ENCODE measurements at regions of chr6 and their contacts with region 1.

Region 1: GRCh38 chr6:39114704-39115599 is at the start of gene SAYSD1:
- DNase-seq: peak; percentile 96
- ATAC-seq: peak; percentile 77
- H3K4me3 Mint-ChIP-seq: peak within 1 kb of the TSS; percentile 85
- H3K27ac Mint-ChIP-seq: peak within 1 kb of the TSS; percentile 98
- H3K4me1 Mint-ChIP-seq: peaks cover 63% of the 10 kb centered on the region
- H3K27me3 Mint-ChIP-seq: no peaks in the 10 kb centered on the region
- total RNA-seq, gene SAYSD1: 14.1 to 16.7 TPM

Region 2: GRCh38 chr6:37987018-37987417 is 1127.9 kb before region 1 on chr6:
- CTCF ChIA-PET with region 1: no interaction called
- POLR2A ChIA-PET with region 1: no interaction called
- intact Hi-C with region 1: loop called in 1 of 2 experiments (anchors 10 kb)
- DNase-seq: peak; percentile 55
- ATAC-seq: peak; percentile 74
- H3K4me3 Mint-ChIP-seq: peak overlapping the region; percentile 7
- H3K27ac Mint-ChIP-seq: peak overlapping the region; percentile 29
- H3K4me1 Mint-ChIP-seq: peaks cover 71% of the 10 kb centered on the region
- H3K27me3 Mint-ChIP-seq: no peaks in the 10 kb centered on the region

Region 3: GRCh38 chr6:38702558-38703397 is 412.2 kb before region 1 on chr6 and contains the start of gene GLO1:
- CTCF ChIA-PET with region 1: no interaction called
- POLR2A ChIA-PET with region 1: no interaction called
- intact Hi-C with region 1: loop called in 1 of 2 experiments (anchors 1 kb)
- DNase-seq: peak; percentile 98
- ATAC-seq: peak; percentile 100
- H3K4me3 Mint-ChIP-seq: peak within 1 kb of the TSS; percentile 96
- H3K27ac Mint-ChIP-seq: peak within 1 kb of the TSS; percentile 98
- H3K4me1 Mint-ChIP-seq: peaks cover 38% of the 10 kb centered on the region
- H3K27me3 Mint-ChIP-seq: peaks cover 3% of the 10 kb centered on the region
- total RNA-seq, gene GLO1: 150 to 152 TPM

Region 4: GRCh38 chr6:39102071-39102820 is 12.7 kb before region 1 on chr6:
- CTCF ChIA-PET with region 1: interaction called, 18 read pairs
- POLR2A ChIA-PET with region 1: interaction called, 3 read pairs
- intact Hi-C with region 1: loop called in 1 of 2 experiments (anchors 1 kb)
- DNase-seq: peak; percentile 58
- ATAC-seq: peak; percentile 60
- H3K4me3 Mint-ChIP-seq: no peak overlapping the region
- H3K27ac Mint-ChIP-seq: no peak overlapping the region
- H3K4me1 Mint-ChIP-seq: peaks cover 33% of the 10 kb centered on the region
- H3K27me3 Mint-ChIP-seq: no peaks in the 10 kb centered on the region

Region 5: DNA sequence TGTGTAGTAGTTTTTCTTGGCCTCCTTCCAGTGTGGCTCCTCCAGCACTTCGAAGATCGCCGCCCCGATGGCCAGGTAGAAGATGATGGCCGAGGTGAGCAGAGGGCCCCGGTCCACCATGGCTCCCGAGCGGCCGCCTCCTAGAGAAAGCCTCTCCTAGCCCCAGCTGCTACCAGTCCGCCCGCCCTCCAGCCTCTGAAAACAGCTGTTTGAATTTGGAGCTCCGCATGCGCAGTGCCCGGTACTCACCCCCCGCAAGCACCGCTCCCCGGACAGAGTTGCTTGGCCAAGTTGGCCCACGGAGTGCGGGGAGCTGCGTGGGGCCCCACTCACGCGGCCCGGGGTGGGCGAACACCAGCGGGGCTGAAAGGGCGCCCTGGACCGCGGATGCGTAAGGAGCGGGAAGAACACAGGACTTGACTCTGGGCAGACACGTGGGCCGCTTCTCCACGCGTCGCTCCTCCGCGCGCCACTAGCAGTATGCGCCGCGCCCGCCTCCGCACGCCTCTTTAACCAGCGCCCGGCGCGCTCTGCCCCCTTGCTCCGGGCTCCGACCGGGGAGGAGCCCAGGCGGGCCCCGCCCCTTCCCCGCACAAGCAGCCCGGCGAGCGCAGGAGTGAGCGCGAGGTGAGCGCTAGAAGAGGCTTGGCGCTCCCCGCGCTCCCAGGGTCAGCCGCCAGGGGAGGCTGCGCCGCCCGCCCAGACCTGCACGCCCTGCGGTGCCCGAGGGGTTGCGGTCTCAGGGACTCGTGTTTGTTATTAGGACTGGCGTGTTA is 114.2 kb after region 1 on chr6 and contains the start of gene KCNK5:
- CTCF ChIA-PET with region 1: no interaction called
- POLR2A ChIA-PET with region 1: interaction called, 3 read pairs
- intact Hi-C with region 1: loop called (anchors 1 to 2 kb)
- DNase-seq: peak; percentile 94
- ATAC-seq: peak; percentile 93
- H3K4me3 Mint-ChIP-seq: peak within 1 kb of the TSS; percentile 86
- H3K27ac Mint-ChIP-seq: peak within 1 kb of the TSS; percentile 86
- H3K4me1 Mint-ChIP-seq: peaks cover 36% of the 10 kb centered on the region
- H3K27me3 Mint-ChIP-seq: peaks cover 2% of the 10 kb centered on the region
- total RNA-seq, gene KCNK5: 12.7 to 15.8 TPM

Region 6: DNA sequence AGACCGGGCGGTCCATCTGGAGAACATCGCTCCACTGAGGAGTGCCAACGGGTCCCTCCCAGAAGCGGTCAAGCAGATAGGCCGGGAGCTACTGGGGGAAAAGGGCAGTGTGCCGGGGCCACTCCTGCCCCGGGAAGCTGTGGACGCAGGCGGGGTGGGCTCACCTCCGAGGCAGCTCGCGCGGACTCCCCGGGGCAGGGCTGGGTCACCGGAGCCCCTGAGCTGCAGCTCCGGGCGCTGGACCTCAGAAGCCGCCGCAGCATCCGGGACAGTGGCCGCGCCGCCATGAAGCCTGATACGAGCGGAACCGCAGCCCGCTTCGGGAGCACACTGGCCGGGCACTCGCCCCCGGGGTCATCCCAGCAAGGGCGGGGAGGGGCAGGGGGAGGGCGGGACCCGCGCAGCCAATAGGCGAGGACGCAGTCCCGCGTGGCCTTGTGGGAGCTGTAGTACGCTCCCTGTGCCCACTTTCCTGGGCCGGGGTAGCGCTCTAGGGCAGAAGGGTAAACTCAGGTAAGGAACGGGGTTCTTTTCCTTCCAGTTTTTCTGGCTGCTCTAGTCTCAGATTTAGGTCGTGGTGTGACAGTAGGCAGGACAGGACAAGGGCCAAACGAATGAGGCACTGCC is 819.3 kb after region 1 on chr6 and contains the start of gene MOCS1:
- CTCF ChIA-PET with region 1: no interaction called
- POLR2A ChIA-PET with region 1: no interaction called
- intact Hi-C with region 1: loop called in 1 of 2 experiments (anchors 10 kb)
- DNase-seq: peak; percentile 86
- ATAC-seq: peak; percentile 93
- H3K4me3 Mint-ChIP-seq: peak within 1 kb of the TSS; percentile 82
- H3K27ac Mint-ChIP-seq: peak within 1 kb of the TSS; percentile 86
- H3K4me1 Mint-ChIP-seq: peaks cover 23% of the 10 kb centered on the region
- H3K27me3 Mint-ChIP-seq: peaks cover 3% of the 10 kb centered on the region
- total RNA-seq, gene MOCS1: 6.2 to 6.4 TPM